Posterior cingulate gyrus (tissue), 11 donors: ENCODE measurements at regions of chr6 and their contacts with region 1.

Region 1: DNA sequence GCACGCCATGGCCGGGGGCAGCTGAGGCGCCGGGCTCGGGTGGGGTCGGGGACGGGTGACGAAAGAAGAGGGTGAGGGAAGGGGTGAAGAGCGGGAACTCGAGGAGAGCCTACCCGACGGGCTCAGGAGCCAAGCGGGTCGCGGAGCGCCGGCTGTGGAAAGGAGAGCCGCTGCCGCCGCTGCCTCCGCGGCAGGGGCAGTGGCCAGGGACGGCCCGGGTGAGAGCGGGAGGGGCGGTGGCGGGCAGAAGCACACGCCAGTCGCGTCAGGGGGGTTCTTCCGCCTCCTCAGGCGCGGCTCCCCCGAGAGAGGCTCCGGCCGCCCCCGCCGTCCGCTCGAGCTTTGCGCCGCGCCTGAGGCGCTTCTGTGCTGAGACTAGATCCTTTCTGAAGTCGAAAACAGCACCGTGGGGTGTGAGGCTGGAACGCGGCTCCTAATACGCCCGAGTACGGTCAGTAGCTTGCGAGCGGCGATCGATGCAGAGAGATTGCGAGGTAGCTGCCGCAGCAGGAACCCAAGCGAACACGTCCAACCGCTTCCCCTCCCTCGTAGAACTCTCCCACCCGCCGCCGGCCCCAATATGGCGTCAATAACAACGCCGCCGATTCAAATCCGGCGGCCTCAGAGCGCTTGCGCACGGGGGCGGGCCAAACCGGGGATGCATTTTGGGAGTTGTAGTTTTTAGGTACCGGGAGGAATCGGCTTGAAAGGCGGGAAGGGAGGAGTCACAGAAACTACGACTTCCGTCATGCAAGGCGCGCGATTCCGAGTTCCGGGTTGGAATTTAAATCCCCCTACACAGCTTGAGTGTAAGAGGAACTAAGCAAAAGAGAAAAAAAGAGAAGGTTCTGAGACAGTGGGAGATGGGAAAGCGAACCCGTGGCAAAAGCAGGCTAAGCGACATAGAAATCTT is at the start of gene AKIRIN2:
- DNase-seq: peak; percentile 92 to 99 (median 96)

Region 2: DNA sequence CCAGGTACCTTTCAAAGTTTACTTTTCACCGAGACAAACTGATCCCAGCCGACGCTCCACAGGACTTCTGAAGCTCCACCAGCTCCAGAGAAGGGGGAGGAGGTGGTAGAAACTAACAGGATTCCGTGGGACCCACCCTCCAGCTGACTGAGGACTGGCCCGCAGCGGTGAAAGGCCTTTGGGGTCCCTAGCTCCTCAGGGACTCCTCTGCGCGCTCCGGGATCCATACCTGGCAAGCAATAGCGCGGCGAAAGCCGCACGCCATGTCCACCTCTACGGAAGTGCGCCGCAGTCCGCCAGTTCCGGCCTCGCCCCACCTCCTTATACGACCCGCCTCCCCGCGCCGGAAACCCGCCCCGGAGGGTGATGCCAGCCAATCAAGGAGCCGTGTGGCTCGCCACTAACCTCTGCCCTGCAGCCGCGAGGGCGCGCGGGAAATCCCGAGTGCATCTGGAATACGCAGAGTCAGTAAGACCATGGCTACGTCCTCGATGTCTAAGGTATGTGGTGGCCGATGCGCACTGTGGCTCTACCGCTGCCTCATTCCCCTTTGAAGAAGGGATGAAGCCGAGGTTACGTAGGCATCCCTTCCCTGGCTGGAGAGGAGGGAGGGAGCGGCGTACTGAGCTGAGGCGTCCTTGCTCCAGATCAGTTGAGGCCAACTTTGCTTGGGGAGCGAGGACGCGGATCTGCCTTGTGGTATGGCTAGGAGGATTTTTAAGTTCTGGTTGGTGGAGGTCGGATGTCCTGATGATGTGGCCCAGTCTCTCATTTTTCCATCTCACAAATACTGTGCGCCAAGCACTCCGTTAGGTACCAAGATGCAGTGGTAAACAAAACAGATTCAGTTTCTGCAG is 112.0 kb before region 1 on chr6 and contains the starts of genes ORC3 and RARS2:
- intact Hi-C with region 1: loop called (anchors 10 kb)
- DNase-seq: peak; percentile 94 to 100 (median 98)

Region 3: GRCh38 chr6:87723170-87724078 is 21.5 kb after region 1 on chr6:
- intact Hi-C with region 1: loop called (anchors 2 kb)
- DNase-seq: peak; percentile 40 to 95 (median 73)

Region 4: DNA sequence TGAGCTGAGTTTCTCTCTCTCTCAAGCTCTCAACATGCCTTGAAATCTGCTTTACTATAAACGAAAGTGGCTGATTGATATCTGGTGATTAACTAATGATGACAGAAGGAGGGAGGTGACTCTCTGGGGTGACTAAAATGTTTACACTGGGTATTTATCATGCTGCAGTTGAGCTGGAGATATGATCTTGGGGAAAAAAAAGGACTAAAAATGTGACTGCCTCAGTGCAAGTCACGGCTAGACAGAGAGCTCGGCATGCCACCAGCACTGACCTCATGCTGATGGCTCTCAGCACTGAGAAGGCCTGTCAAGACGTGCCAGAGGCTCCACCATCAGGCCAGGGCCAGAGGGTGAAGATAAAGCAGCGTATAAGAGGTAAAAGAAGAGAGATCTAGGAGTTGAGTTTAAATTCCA is 242.6 kb after region 1 on chr6:
- intact Hi-C with region 1: no loop called
- DNase-seq: peak in 6 of 10 donors; percentile 31 to 83 (median 51)